ENCODE measurements at regions of chr17 and their contacts with region 1.

Region 1: GRCh38 chr17:69567130-69567529 is 152.6 kb downstream of the MAP2K6 start:
- DNase-seq: no peak
- ATAC-seq: no peak
- H3K4me3 ChIP-seq: no peak overlapping the region
- H3K27ac ChIP-seq: no peak overlapping the region
- H3K4me1 ChIP-seq: no peaks in the 10 kb centered on the region
- H3K27me3 ChIP-seq: no peaks in the 10 kb centered on the region
- CTCF ChIP-seq: no peak
- EP300 ChIP-seq: no peak
- POLR2A ChIP-seq: no peak
- RAD21 ChIP-seq: no peak

Region 2: DNA sequence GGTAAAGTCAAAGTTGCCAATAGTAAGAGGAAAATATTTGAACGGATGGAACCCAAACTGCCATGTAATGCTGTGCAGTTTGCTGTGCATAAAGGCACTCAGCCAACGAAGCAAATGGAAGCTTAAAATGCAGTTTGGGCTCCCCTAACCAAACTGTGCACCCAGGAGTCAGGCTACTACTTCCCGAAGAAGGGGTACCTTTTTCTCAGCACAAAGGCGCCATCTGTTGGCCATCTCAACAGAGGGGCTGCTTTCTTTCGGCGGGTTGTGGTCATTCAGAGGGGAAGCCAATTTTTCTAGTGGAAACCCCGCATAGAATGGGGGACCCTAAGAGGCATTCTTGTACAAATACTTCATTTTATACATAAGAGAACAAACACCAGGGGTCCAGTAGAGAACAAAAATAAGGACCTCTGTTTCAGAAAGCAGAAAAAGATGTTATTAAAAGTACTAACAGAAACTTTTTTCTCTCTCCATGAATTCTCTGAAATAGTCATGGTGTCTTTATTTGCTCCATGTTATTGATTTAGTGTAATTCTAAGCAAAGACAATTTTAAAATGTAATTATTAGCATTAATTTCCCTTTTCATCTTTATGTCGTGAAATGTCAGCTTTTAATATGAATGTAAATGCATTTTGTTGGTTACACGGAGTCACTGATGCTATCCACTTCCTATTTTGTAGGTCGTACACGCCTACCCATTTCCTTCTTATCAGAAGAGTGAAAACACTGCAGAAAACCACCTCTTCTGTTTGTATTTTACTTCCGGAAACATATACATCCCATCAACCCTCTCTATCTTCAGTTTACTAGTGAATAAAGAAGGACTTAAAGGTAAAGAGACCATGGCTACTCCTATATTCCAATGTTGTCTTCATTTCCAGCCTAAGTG is 1055.5 kb after region 1 on chr17:
- CTCF ChIA-PET with region 1: interaction called, 32 read pairs
- POLR2A ChIA-PET with region 1: no interaction called
- RAD21 ChIA-PET with region 1: interaction called, 8 read pairs
- SMC1A ChIA-PET with region 1: interaction called, 7 read pairs
- in situ Hi-C with region 1: no loop called
- intact Hi-C with region 1: loop called (anchors 1 kb)
- DNase-seq: no peak
- ATAC-seq: peak; percentile 85
- H3K4me3 ChIP-seq: no peak overlapping the region
- H3K27ac ChIP-seq: no peak overlapping the region
- H3K4me1 ChIP-seq: no peaks in the 10 kb centered on the region
- H3K27me3 ChIP-seq: no peaks in the 10 kb centered on the region
- CTCF ChIP-seq: peak; percentile 25 to 58 (median 57); a peak in 5 of 6 replicates
- EP300 ChIP-seq: no peak
- POLR2A ChIP-seq: no peak
- RAD21 ChIP-seq: peak; percentile 74

Measured in GM12878 (cell line).